ENCODE measurements at regions of chr2 and their contacts with region 1.

Region 1: GRCh38 chr2:78676921-78677696 is 348.4 kb upstream of the REG3G start:
- DNase-seq: no peak
- H3K4me3 Mint-ChIP-seq: no peak overlapping the region
- H3K27ac Mint-ChIP-seq: no peak overlapping the region
- H3K4me1 Mint-ChIP-seq: no peaks in the 10 kb centered on the region
- H3K27me3 Mint-ChIP-seq: no peaks in the 10 kb centered on the region

Region 2: GRCh38 chr2:78721302-78722033 is 44.4 kb after region 1 on chr2:
- intact Hi-C with region 1: no loop called
- DNase-seq: no peak
- H3K4me3 Mint-ChIP-seq: no peak overlapping the region
- H3K27ac Mint-ChIP-seq: no peak overlapping the region
- H3K4me1 Mint-ChIP-seq: no peaks in the 10 kb centered on the region
- H3K27me3 Mint-ChIP-seq: no peaks in the 10 kb centered on the region

Region 3: GRCh38 chr2:79887747-79888374 is 1210.8 kb after region 1 on chr2:
- intact Hi-C with region 1: loop called (anchors 10 kb)
- DNase-seq: no peak
- H3K4me3 Mint-ChIP-seq: no peak overlapping the region
- H3K27ac Mint-ChIP-seq: no peak overlapping the region
- H3K4me1 Mint-ChIP-seq: no peaks in the 10 kb centered on the region
- H3K27me3 Mint-ChIP-seq: no peaks in the 10 kb centered on the region